ENCODE measurements at regions of chr6 and their contacts with region 1.

Region 1: GRCh38 chr6:593139-593906 is 63.6 kb downstream of the HUS1B start:
- DNase-seq: peak; percentile 20 to 69 (median 62)
- ATAC-seq: peak; percentile 78
- H3K4me3 ChIP-seq: no peak overlapping the region
- H3K4me3 Mint-ChIP-seq: no peak overlapping the region
- H3K27ac ChIP-seq: no peak overlapping the region
- H3K27ac Mint-ChIP-seq: peak overlapping the region in 1 of 9 donors; percentile 44
- H3K4me1 ChIP-seq: no peaks in the 10 kb centered on the region
- H3K4me1 Mint-ChIP-seq: peaks cover 0 to 19% (median 0%) of the 10 kb centered on the region in 7 donors
- H3K27me3 ChIP-seq: no peaks in the 10 kb centered on the region
- H3K27me3 Mint-ChIP-seq: no peaks in the 10 kb centered on the region

Region 2: DNA sequence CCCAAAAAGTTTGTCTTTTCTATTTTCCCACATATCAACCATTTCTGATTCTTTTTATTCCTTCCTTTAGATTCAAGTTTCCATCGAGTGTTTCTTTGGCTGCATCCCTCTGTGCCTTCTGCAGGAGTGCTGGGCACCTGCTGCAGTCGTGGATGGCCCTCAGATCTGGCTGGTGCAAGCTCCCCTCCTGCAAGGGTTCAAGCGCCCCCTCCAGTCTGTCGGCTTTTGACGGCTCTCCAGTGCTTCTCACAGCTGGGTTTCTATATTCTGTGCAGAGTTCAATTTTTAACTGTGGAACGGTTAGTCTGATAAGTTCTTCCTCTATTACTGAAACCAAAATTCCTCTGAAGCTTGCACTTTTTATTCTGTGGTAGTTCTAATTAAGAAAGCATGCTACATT is 68.5 kb before region 1 on chr6:
- CTCF ChIA-PET with region 1: no interaction called
- POLR2A ChIA-PET with region 1: no interaction called
- intact Hi-C with region 1: no loop called
- DNase-seq: peak in 2 of 9 donors; percentile 15 to 16
- ATAC-seq: peak; percentile 41
- H3K4me3 ChIP-seq: no peak overlapping the region
- H3K4me3 Mint-ChIP-seq: no peak overlapping the region
- H3K27ac ChIP-seq: no peak overlapping the region
- H3K27ac Mint-ChIP-seq: peak overlapping the region in 6 of 9 donors; percentile 15 to 90 (median 48)
- H3K4me1 ChIP-seq: no peaks in the 10 kb centered on the region
- H3K4me1 Mint-ChIP-seq: peaks cover 5 to 19% (median 13%) of the 10 kb centered on the region in 7 donors
- H3K27me3 ChIP-seq: no peaks in the 10 kb centered on the region
- H3K27me3 Mint-ChIP-seq: no peaks in the 10 kb centered on the region

Region 3: GRCh38 chr6:722077-722524 is 128.8 kb after region 1 on chr6:
- CTCF ChIA-PET with region 1: interaction called, 8 read pairs
- POLR2A ChIA-PET with region 1: no interaction called
- intact Hi-C with region 1: loop called (anchors 1 kb)
- DNase-seq: peak; percentile 37 to 73 (median 61)
- ATAC-seq: peak; percentile 89
- H3K4me3 ChIP-seq: no peak overlapping the region
- H3K4me3 Mint-ChIP-seq: peak overlapping the region in 1 of 10 donors; percentile 9
- H3K27ac ChIP-seq: no peak overlapping the region
- H3K27ac Mint-ChIP-seq: peak overlapping the region in 1 of 9 donors; percentile 25
- H3K4me1 ChIP-seq: no peaks in the 10 kb centered on the region
- H3K4me1 Mint-ChIP-seq: peaks cover 0 to 11% (median 6%) of the 10 kb centered on the region in 7 donors
- H3K27me3 ChIP-seq: no peaks in the 10 kb centered on the region
- H3K27me3 Mint-ChIP-seq: peaks cover 0 to 29% (median 16%) of the 10 kb centered on the region in 5 donors

Region 4: DNA sequence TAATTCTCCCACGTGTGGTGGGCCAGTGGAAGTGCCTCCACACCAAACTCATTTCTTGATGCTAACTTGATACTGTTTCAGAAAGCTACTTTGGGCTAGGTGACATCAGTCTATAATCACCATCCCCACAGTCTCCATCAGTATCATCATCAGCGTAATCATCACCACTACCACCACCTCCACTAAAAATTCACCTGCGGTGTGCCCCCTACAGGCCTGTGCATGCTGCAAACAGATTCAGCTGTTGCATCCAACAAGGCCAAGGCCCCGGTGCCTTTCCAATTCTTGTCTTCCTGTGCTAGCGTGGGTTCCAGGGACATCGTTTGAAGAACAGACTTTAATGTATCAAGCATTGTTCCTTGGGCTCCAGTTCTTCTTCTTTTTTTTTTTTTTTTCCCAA is 301.0 kb after region 1 on chr6:
- CTCF ChIA-PET with region 1: no interaction called
- POLR2A ChIA-PET with region 1: no interaction called
- intact Hi-C with region 1: loop called (anchors 5 kb)
- DNase-seq: no peak
- ATAC-seq: no peak
- H3K4me3 ChIP-seq: no peak overlapping the region
- H3K4me3 Mint-ChIP-seq: no peak overlapping the region
- H3K27ac ChIP-seq: no peak overlapping the region
- H3K27ac Mint-ChIP-seq: no peak overlapping the region
- H3K4me1 ChIP-seq: no peaks in the 10 kb centered on the region
- H3K4me1 Mint-ChIP-seq: peaks cover 0 to 3% (median 0%) of the 10 kb centered on the region in 7 donors
- H3K27me3 ChIP-seq: peaks cover 0 to 8% of the 10 kb centered on the region in 2 donors
- H3K27me3 Mint-ChIP-seq: peaks cover 10 to 24% (median 19%) of the 10 kb centered on the region in 5 donors

Region 5: GRCh38 chr6:1396952-1397868 is 803.9 kb after region 1 on chr6:
- CTCF ChIA-PET with region 1: interaction called, 14 read pairs
- POLR2A ChIA-PET with region 1: no interaction called
- intact Hi-C with region 1: loop called (anchors 1 kb)
- DNase-seq: peak; percentile 39 to 75 (median 67)
- ATAC-seq: peak; percentile 78
- H3K4me3 ChIP-seq: no peak overlapping the region
- H3K4me3 Mint-ChIP-seq: peak overlapping the region in 5 of 10 donors; percentile 4 to 57 (median 41)
- H3K27ac ChIP-seq: no peak overlapping the region
- H3K27ac Mint-ChIP-seq: peak overlapping the region in 1 of 9 donors; percentile 24
- H3K4me1 ChIP-seq: no peaks in the 10 kb centered on the region
- H3K4me1 Mint-ChIP-seq: peaks cover 0 to 16% (median 6%) of the 10 kb centered on the region in 7 donors
- H3K27me3 ChIP-seq: peaks cover 0 to 17% of the 10 kb centered on the region in 2 donors
- H3K27me3 Mint-ChIP-seq: peaks cover 54 to 67% (median 59%) of the 10 kb centered on the region in 5 donors